Ovary (tissue), 10 donors: ENCODE measurements at regions of chr9 and their contacts with region 1.

Region 1: DNA sequence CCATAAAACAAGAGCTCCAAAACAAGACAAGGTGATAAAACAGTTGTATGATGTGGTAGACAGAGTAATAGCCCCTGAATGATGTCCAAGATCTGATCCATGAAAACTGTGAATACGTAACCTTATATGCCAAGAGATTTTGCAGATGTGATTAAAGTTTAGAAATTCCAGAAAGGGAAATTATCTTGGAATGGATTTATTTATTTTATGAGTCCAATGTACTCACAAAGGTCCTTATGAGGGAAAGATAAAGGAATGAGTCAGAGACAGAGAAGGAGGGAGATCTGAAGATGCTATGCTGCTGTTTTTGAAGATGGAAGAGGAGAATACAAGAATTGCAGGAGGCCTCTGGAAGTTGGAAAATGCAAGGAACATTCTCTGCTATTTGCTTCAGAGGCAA is 1775.8 kb upstream of the C9orf72 start:
- DNase-seq: no peak
- H3K4me3 ChIP-seq: no peak overlapping the region
- H3K27ac ChIP-seq: no peak overlapping the region
- H3K4me1 ChIP-seq: no peaks in the 10 kb centered on the region
- H3K27me3 ChIP-seq: no peaks in the 10 kb centered on the region
- CTCF ChIP-seq: no peak
- EP300 ChIP-seq: no peak
- POLR2A ChIP-seq: no peak

Region 2: DNA sequence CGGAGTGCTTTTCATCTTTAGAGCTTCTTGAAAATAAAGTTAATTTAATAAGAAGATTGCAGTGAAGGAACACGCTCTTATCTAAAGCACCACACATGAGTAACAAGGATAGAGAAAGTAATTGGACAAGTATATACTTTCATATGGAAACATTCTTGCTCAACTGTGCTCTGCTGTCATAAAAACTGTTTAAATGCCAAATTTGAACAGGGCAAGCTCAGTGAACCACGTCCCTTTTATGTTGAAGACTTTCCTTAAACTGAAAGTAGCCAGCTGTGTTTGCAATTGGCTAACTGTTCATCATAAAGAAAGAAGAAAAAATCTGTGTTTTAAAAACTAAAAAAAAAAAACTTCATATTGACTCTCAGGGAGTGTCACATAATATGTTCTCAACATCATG is 165.1 kb before region 1 on chr9:
- intact Hi-C with region 1: no loop called
- DNase-seq: no peak
- H3K4me3 ChIP-seq: no peak overlapping the region
- H3K27ac ChIP-seq: no peak overlapping the region
- H3K4me1 ChIP-seq: no peaks in the 10 kb centered on the region
- H3K27me3 ChIP-seq: no peaks in the 10 kb centered on the region
- CTCF ChIP-seq: no peak
- EP300 ChIP-seq: no peak
- POLR2A ChIP-seq: no peak

Region 3: DNA sequence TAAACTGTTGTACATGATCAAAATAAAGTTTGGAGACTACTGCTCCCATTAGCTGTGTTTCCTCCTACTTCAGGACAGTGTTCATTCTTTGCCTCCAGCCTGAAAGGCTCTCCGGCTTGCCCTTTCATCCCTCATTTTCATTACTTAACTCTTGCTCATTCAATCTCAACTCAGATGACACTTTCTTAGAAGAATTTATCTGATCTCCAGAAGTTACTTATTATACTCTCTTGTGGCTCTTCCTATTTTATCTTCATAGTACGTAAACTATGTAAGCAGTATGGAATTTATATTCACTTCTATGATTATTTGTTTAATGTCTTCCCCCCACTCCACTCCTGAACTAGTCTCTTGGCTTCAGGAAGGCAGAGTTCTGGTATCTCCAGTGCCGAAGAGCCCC is 37.8 kb before region 1 on chr9:
- intact Hi-C with region 1: loop called in 1 of 4 experiments (anchors 10 kb)
- DNase-seq: no peak
- H3K4me3 ChIP-seq: no peak overlapping the region
- H3K27ac ChIP-seq: no peak overlapping the region
- H3K4me1 ChIP-seq: no peaks in the 10 kb centered on the region
- H3K27me3 ChIP-seq: no peaks in the 10 kb centered on the region
- CTCF ChIP-seq: no peak
- EP300 ChIP-seq: no peak
- POLR2A ChIP-seq: no peak